ENCODE measurements at regions of chr20 and their contacts with region 1.

Region 1: GRCh38 chr20:59850018-59850641 is 83.3 kb downstream of the SYCP2 start:
- DNase-seq: no peak
- H3K4me3 ChIP-seq: no peak overlapping the region
- H3K27ac ChIP-seq: no peak overlapping the region
- H3K4me1 ChIP-seq: no peaks in the 10 kb centered on the region
- H3K27me3 ChIP-seq: no peaks in the 10 kb centered on the region
- CTCF ChIP-seq: peak in 3 of 4 experiments; percentile 58 to 77 (median 61)
- EP300 ChIP-seq: no peak
- POLR2A ChIP-seq: no peak

Region 2: GRCh38 chr20:59782986-59783640 is 67.0 kb before region 1 on chr20:
- intact Hi-C with region 1: loop called (anchors 5 kb)
- DNase-seq: no peak
- H3K4me3 ChIP-seq: no peak overlapping the region
- H3K27ac ChIP-seq: no peak overlapping the region
- H3K4me1 ChIP-seq: no peaks in the 10 kb centered on the region
- H3K27me3 ChIP-seq: peaks cover 0 to 7% (median 0%) of the 10 kb centered on the region in 3 donors
- CTCF ChIP-seq: peak in 3 of 4 experiments; percentile 56 to 73 (median 68)
- EP300 ChIP-seq: no peak
- POLR2A ChIP-seq: no peak

Measured in sigmoid colon (tissue), 7 donors.